ENCODE measurements at regions of chr22 and their contacts with region 1.

Region 1: GRCh38 chr22:49183826-49184216 is 643.9 kb downstream of the BRD1 start:
- DNase-seq: no peak
- ATAC-seq: no peak
- H3K4me3 ChIP-seq: no peak overlapping the region
- H3K27ac ChIP-seq: no peak overlapping the region
- H3K4me1 ChIP-seq: no peaks in the 10 kb centered on the region
- H3K27me3 ChIP-seq: no peaks in the 10 kb centered on the region

Region 2: GRCh38 chr22:49124608-49125007 is 59.2 kb before region 1 on chr22:
- intact Hi-C with region 1: loop called in 1 of 4 experiments (anchors 10 kb)
- DNase-seq: no peak
- ATAC-seq: no peak
- H3K4me3 ChIP-seq: no peak overlapping the region
- H3K27ac ChIP-seq: no peak overlapping the region
- H3K4me1 ChIP-seq: peaks cover 2% of the 10 kb centered on the region
- H3K27me3 ChIP-seq: no peaks in the 10 kb centered on the region